ENCODE measurements at regions of chr3 and their contacts with region 1.

Region 1: GRCh38 chr3:88113311-88114162 is 36.2 kb upstream of the C3orf38 start:
- DNase-seq: peak in 1 of 2 experiments; percentile 25
- H3K4me3 ChIP-seq: no peak overlapping the region
- H3K27ac ChIP-seq: no peak overlapping the region
- H3K4me1 ChIP-seq: no peaks in the 10 kb centered on the region
- H3K27me3 ChIP-seq: no peaks in the 10 kb centered on the region
- CTCF ChIP-seq: peak; percentile 80

Region 2: GRCh38 chr3:87260270-87260669 is 853.3 kb before region 1 on chr3:
- CTCF ChIA-PET with region 1: no interaction called
- POLR2A ChIA-PET with region 1: no interaction called
- intact Hi-C with region 1: loop called (anchors 10 kb)
- DNase-seq: peak; percentile 20 to 50
- H3K4me3 ChIP-seq: no peak overlapping the region
- H3K27ac ChIP-seq: no peak overlapping the region
- H3K4me1 ChIP-seq: no peaks in the 10 kb centered on the region
- H3K27me3 ChIP-seq: no peaks in the 10 kb centered on the region
- CTCF ChIP-seq: peak; percentile 84

Region 3: DNA sequence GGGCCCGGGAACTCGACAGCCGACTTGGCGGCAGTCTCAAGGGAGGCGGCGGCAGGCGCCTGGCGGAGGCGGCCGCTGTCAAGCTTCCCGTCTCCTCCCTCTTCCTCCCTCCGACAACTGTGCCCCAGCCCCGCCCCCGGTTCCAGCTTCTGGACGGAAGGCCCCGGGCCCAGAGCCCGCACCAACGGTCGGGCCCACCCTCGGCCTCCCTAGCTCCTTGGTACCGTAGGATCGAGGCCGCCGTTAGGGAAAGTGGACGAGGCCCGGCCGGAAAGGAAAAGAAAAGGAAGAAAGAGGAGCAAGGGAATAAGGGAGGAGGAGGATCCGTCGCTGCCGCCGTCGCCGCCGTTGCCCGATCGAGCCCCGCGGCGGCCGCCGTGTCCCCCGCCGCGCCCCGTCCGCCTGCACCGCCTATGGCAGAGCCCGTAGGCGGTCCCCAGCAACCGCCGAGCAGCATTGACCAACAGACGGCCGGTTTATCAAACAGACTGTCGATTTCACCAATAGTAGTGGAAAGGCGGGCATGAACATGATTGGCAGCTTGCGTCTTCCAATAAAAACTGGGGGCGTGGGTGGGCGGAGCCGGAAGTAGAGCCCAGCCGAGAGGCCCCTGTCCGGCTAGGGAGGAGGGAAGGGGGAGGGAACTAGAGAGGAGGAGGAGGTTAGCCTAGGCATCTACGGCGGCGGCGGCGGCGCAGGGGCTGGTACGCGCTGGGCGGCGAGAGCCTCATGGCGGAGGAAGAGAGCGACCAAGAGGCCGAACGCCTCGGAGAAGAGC is 54.8 kb before region 1 on chr3 and contains the starts of genes CGGBP1 and ZNF654:
- CTCF ChIA-PET with region 1: no interaction called
- POLR2A ChIA-PET with region 1: no interaction called
- intact Hi-C with region 1: loop called (anchors 5 kb)
- DNase-seq: peak; percentile 96 to 98
- H3K4me3 ChIP-seq: peak within 1 kb of the TSS; percentile 89
- H3K27ac ChIP-seq: peak within 1 kb of the TSS; percentile 60
- H3K4me1 ChIP-seq: peaks cover 30% of the 10 kb centered on the region
- H3K27me3 ChIP-seq: no peaks in the 10 kb centered on the region
- CTCF ChIP-seq: no peak
- total RNA-seq, gene CGGBP1: 35.9 and 47.5 TPM in 2 replicates
- total RNA-seq, gene ZNF654: 7.2 and 9.6 TPM in 2 replicates

Measured in PC-9 (cell line).